ENCODE measurements at regions of chr7 and their contacts with region 1.

Region 1: GRCh38 chr7:77940647-77941046 is 142.1 kb downstream of the PHTF2 start:
- DNase-seq: peak in 1 of 2 donors; percentile 8
- ATAC-seq: no peak
- H3K4me3 ChIP-seq: no peak overlapping the region
- H3K27ac ChIP-seq: no peak overlapping the region
- H3K4me1 ChIP-seq: peaks cover 0 to 2% (median 0%) of the 10 kb centered on the region in 9 donors
- H3K27me3 ChIP-seq: no peaks in the 10 kb centered on the region
- CTCF ChIP-seq: peak; percentile 17 to 79 (median 66)

Region 2: DNA sequence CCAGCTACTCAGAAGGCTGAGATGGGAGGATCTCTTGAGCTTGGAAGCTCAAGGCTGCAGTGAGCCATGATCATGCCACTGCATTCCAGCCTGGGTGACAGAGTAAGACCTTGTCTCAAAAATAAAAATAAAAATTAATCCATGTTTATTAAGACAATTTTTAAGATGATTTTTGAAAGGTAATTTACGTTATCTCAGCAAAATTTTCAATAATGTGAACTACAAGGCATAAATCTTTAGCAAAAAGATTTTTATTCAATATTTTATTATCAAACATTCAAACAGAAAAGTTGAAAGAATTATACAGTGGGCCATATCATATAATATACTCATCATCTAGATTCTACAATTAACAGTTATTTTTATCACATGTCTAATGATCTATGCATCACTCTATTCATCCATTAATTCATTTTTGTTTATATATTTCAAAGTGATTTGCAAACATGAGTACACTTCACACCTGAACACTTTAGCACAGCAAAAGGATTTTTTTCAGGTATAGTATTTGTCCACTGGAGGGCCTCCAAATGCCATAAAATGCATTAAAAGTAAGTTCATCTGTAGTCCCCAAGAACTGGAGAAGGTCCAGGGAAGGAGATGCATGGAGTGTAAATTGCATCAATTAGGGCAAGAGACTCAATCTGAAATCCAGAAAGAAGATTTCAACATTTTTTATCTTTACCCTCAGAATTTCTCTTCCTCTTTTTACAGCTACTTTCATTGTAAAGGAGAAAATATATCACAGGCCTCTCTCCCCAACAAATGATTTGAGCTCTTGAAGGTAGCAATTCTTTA is 283.0 kb before region 1 on chr7:
- intact Hi-C with region 1: loop called in 1 of 10 experiments (anchors 10 kb)
- DNase-seq: no peak
- ATAC-seq: no peak
- H3K4me3 ChIP-seq: no peak overlapping the region
- H3K27ac ChIP-seq: no peak overlapping the region
- H3K4me1 ChIP-seq: no peaks in the 10 kb centered on the region
- H3K27me3 ChIP-seq: no peaks in the 10 kb centered on the region
- CTCF ChIP-seq: peak in 8 of 9 donors; percentile 26 to 60 (median 53)

Region 3: GRCh38 chr7:77798394-77799077 is 142.1 kb before region 1 on chr7 and contains the starts of genes PHTF2 and TMEM60:
- intact Hi-C with region 1: loop called in 1 of 10 experiments (anchors 10 kb)
- DNase-seq: peak; percentile 98 to 99
- ATAC-seq: peak; percentile 95 to 99 (median 98)
- H3K4me3 ChIP-seq: peak within 1 kb of the TSS; percentile 81 to 97 (median 90)
- H3K27ac ChIP-seq: peak within 1 kb of the TSS; percentile 75 to 92 (median 86)
- H3K4me1 ChIP-seq: peaks cover 7 to 67% (median 38%) of the 10 kb centered on the region in 9 donors
- H3K27me3 ChIP-seq: no peaks in the 10 kb centered on the region
- CTCF ChIP-seq: peak; percentile 27 to 68 (median 42)
- total RNA-seq, gene PHTF2: 13.6 to 29.1 (median 25.6) TPM
- total RNA-seq, gene TMEM60: 4.7 to 9.9 (median 7.1) TPM

Region 4: DNA sequence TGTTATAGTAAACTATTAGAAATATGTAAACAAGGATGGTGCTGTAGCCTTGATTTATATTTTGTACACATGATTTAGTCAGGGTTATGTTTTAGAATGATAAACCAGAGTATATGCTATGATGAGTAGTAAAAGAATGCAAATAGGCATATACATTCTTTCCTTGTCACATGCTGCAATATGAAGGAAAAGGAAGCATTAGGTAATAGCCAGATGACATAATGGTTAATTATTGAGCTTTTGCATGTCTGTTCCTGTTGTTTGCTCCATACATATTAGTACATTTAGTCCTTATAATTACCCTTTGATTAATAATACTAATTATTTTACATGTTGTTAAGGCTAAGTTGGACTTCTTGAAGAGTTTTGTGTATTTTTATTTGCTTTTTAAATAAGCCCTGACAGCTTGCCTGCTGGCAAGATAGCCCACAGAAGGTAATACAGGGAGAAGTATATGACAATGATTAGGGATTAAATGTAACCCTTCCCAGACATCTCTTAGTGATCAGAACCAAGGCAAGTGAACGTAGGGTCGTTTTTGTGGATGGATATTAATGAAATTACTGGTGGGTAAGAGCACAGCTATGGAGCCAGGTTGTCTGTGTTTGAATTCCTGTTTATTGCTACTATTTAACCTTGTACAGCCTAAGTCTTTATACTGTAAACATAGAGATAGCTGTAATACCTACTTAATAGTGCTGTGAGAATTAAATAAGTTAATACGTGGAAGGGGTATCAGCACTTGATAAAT is 73.7 kb before region 1 on chr7:
- intact Hi-C with region 1: no loop called
- DNase-seq: no peak
- ATAC-seq: no peak
- H3K4me3 ChIP-seq: no peak overlapping the region
- H3K27ac ChIP-seq: no peak overlapping the region
- H3K4me1 ChIP-seq: peaks cover 0 to 17% (median 3%) of the 10 kb centered on the region in 9 donors
- H3K27me3 ChIP-seq: no peaks in the 10 kb centered on the region
- CTCF ChIP-seq: no peak

Region 5: DNA sequence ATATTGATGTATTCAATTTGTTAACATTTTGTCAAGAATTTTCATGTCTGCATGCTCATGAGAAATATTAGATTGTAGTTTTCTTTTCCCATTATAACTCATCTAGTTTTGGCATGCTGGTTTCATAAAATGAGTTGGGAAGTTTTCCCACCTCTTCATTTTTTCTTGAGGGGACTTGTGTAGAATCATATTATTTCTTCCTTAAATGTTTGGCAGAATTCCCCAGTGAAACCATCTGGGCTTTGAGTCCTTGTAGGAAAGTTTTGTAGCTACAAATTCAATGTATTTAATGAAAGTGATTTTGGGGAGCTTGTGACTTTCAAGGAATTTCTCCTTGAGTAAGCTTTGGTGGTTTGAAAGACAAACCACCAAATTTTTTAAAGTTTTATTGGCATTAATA is 31.1 kb after region 1 on chr7:
- intact Hi-C with region 1: no loop called
- DNase-seq: no peak
- ATAC-seq: no peak
- H3K4me3 ChIP-seq: no peak overlapping the region
- H3K27ac ChIP-seq: no peak overlapping the region
- H3K4me1 ChIP-seq: no peaks in the 10 kb centered on the region
- H3K27me3 ChIP-seq: no peaks in the 10 kb centered on the region
- CTCF ChIP-seq: no peak

Region 6: DNA sequence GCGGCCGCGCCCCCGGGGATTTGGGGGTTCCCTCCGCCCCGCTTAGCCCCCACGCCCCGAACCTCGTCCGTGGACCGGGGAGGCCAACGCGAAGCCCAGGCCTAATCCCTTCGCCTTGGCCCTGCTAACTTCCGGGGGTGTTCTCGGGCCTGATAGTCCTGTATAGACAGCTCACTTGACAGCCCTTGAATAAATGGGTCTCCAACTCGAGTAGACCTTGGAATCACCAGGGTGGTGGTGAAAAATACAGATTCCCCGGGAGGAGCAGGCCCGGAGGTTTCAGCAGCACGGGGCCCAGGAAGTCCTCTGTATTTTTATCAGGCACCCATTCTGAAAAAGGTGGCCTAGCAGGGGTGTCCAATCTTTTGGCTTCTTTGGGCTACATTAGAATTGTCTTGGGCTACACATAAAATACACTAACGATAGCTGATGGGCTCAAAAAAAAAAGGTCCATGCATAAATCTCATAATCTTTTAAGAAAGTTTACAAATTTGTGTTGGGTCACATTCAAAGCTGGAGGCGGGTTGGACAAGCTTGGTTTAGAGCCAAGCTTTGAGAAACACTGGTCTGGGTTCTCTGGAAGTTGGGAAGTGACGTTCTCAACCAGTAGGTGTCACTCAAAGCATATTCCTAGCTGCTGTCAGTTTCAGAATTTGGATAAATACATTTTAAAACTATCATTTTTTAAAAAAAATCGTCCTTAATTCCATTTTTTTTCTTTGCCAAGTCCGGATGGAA is 79.7 kb after region 1 on chr7:
- intact Hi-C with region 1: loop called in 4 of 10 experiments (anchors 2 to 10 kb)
- DNase-seq: peak in 1 of 2 donors; percentile 82
- ATAC-seq: peak; percentile 73 to 88 (median 81)
- H3K4me3 ChIP-seq: peak overlapping the region; percentile 22 to 66 (median 60)
- H3K27ac ChIP-seq: peak overlapping the region; percentile 93 to 98 (median 96)
- H3K4me1 ChIP-seq: peaks cover 0 to 48% (median 24%) of the 10 kb centered on the region in 9 donors
- H3K27me3 ChIP-seq: peaks cover 0 to 17% (median 0%) of the 10 kb centered on the region in 7 donors
- CTCF ChIP-seq: peak; percentile 66 to 92 (median 80)

Region 7: GRCh38 chr7:78039790-78040776 is 99.4 kb after region 1 on chr7:
- intact Hi-C with region 1: loop called in 3 of 10 experiments (anchors 5 to 10 kb)
- DNase-seq: peak; percentile 10 to 59
- ATAC-seq: peak in 7 of 8 donors; percentile 42 to 79 (median 64)
- H3K4me3 ChIP-seq: peak overlapping the region in 1 of 10 donors; percentile 0
- H3K27ac ChIP-seq: no peak overlapping the region
- H3K4me1 ChIP-seq: peaks cover 0 to 7% (median 0%) of the 10 kb centered on the region in 9 donors
- H3K27me3 ChIP-seq: peaks cover 0 to 9% (median 0%) of the 10 kb centered on the region in 7 donors
- CTCF ChIP-seq: peak; percentile 40 to 89 (median 74)

Region 8: DNA sequence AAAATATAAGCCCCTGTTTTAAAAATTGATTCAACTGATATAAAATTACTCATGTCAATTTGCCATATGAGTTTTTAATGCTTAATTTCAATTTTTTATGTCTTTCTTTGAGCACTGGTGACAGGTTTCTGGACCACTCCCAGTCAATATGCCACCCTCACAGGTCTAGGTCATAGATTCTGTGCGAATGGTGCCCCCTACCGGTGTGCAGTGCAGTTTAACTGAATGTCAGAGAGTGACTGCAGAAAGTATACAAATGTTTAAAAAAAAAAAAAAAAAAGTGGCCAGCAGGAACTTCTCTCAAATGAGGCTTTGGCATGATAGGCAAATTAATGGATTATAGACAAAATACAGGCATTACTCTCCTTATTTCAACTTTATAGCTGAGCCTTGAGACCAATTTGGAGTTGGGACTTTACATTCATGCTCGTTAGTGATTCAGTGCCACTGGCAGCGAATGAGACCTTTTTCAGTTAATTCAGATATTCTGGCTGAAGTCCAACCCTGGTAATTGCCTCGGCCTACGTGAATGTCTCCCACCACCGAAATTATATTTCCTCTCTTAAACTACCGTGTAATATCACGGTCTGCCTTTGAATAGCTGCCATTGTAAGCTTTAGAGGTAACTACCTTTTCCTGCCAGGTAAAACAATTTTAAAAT is 285.5 kb after region 1 on chr7:
- intact Hi-C with region 1: loop called in 1 of 10 experiments (anchors 10 kb)
- DNase-seq: peak; percentile 18 to 26
- ATAC-seq: no peak
- H3K4me3 ChIP-seq: no peak overlapping the region
- H3K27ac ChIP-seq: no peak overlapping the region
- H3K4me1 ChIP-seq: peaks cover 0 to 10% (median 0%) of the 10 kb centered on the region in 9 donors
- H3K27me3 ChIP-seq: no peaks in the 10 kb centered on the region
- CTCF ChIP-seq: peak in 8 of 9 donors; percentile 24 to 52 (median 36)

Region 9: GRCh38 chr7:79176859-79177477 is 1236.3 kb after region 1 on chr7:
- intact Hi-C with region 1: loop called in 3 of 10 experiments (anchors 10 kb)
- DNase-seq: peak in 1 of 2 donors; percentile 7
- ATAC-seq: peak in 4 of 8 donors; percentile 54 to 61 (median 57)
- H3K4me3 ChIP-seq: no peak overlapping the region
- H3K27ac ChIP-seq: no peak overlapping the region
- H3K4me1 ChIP-seq: peaks cover 0 to 3% (median 0%) of the 10 kb centered on the region in 9 donors
- H3K27me3 ChIP-seq: no peaks in the 10 kb centered on the region
- CTCF ChIP-seq: peak; percentile 15 to 75 (median 54)